ENCODE measurements at regions of chr11 and their contacts with region 1.

Region 1: DNA sequence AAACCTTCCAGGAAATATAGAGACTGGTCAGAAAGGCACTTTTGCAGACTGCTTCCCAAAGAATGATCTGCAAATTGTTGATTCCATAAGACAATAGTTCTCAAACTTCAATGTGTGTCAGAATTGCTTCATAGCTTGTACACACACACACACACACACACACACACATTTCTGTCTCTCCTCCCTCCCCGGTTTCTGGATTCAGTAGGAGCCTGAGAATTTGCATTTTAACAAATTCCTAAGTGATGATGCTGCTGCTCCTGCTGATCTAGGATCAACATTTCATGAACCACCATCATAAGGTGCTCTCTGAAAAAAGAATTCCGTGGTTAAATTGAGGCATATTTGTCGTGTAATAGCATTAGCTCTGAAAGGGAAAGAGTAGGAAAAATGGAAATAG is 35.3 kb upstream of the FZD4 start:
- DNase-seq: no peak
- H3K4me3 ChIP-seq: no peak overlapping the region
- H3K27ac ChIP-seq: no peak overlapping the region
- H3K27me3 ChIP-seq: no peaks in the 10 kb centered on the region
- CTCF ChIP-seq: no peak

Region 2: DNA sequence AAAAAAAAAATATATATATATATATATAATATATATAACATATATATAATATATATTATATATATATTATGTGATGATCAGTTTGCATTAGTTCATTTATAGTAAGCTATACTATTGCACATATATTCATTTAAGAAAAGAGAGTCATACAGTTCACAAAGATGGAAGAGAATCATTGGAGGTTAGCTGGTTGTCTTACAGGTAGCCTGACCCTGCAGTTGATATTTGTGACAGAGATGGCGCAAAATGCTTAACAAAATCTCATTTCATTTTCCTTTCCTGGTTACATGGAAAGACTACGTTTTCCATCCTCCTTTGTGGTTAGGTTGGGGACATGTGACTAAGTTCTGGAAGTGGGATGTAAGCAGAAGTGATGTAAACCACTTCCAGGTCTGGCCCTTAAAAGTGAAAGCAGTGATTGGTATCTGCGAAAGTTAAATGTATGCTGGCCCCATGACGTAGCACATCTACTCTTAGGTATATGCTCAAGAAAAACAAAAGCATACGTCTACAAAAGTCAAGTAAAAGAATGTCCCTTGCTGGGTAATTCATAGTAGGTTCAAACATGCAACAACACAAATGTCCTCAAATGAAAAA is 40.0 kb after region 1 on chr11:
- CTCF ChIA-PET with region 1: interaction called, 10 read pairs
- POLR2A ChIA-PET with region 1: no interaction called
- DNase-seq: no peak
- H3K4me3 ChIP-seq: no peak overlapping the region
- H3K27ac ChIP-seq: no peak overlapping the region
- H3K27me3 ChIP-seq: no peaks in the 10 kb centered on the region
- CTCF ChIP-seq: no peak

Region 3: DNA sequence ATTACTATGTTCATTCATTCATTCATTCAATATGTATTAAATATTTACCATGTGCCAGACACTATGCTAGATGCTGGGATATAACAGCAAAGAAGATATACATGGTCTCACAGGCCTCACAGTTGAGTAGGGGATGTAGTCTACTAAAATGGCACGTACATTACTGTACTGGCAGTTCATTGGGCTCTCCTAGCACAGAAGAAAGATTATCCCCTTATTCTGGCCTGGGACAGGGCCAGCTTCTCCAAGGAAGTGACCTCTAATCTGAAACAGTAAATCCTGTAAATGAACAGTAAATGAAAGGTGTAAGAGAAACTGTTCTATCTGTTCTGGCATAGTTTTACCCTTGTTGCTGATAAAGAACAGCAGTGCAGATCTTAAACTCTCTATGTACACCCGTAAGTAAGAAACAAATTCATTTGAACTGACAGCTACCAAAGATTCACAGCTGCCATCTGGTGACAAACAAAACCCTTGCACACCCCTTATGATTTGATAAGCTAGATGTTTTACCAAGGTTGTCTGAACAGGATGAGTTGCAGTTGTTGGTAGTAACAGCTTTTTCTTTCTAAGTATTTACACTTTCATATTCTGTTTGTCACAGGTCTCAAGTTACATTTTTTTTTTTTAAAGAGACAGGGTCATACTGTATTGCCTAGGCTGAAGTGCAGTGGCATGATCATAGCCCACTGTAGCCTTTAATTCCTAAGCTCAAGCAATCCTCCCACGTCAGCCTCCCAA is 310.3 kb after region 1 on chr11:
- CTCF ChIA-PET with region 1: interaction called, 13 read pairs
- POLR2A ChIA-PET with region 1: no interaction called
- DNase-seq: no peak
- H3K4me3 ChIP-seq: no peak overlapping the region
- H3K27ac ChIP-seq: no peak overlapping the region
- H3K27me3 ChIP-seq: no peaks in the 10 kb centered on the region
- CTCF ChIP-seq: no peak